BJ (cell line): ENCODE measurements at regions of chr12 and their contacts with region 1.

Region 1: GRCh38 chr12:122097927-122098756 is 19.6 kb downstream of the MLXIP start:
- DNase-seq: no peak
- H3K4me3 ChIP-seq: no peak overlapping the region
- H3K27me3 ChIP-seq: no peaks in the 10 kb centered on the region
- CTCF ChIP-seq: no peak

Region 2: GRCh38 chr12:122084857-122085405 is 13.2 kb before region 1 on chr12:
- CTCF ChIA-PET with region 1: interaction called, 7 read pairs
- POLR2A ChIA-PET with region 1: interaction called, 10 read pairs
- DNase-seq: no peak
- H3K4me3 ChIP-seq: no peak overlapping the region
- H3K27me3 ChIP-seq: no peaks in the 10 kb centered on the region
- CTCF ChIP-seq: no peak